H1 (cell line): ENCODE measurements at regions of chr15 and their contacts with region 1.

Region 1: DNA sequence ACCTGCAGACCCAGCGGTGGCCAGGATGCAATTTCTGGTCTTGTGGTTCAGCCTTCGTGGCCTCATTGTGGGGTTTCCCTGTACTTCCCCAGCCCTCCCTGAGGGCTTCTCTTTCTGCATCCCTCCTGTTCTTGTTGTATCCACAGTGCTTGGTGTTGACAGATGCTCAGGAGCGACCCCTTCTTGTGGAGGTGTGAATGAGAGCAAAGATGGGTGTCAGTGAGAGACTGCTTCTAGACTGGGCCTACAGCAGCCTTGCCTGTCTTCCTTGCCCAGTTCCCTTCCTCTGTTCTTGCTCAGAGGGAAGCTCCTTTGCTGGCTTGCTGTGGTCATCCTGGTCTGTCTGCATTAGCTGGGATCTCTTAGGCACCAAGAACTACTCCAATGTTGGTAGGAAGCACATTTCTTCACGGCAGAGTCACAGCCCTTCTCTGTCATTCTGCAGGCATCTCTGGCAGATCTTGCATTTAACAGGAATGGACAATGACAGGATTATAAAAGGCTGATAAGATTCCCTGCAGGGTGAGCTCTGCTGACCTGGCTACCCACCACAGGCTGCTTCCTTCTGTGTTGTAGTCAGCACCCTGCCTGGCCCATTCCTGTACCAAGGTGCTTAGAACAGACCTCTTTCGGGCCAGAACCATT is 317.8 kb upstream of the C2CD4B start:
- DNase-seq: peak; percentile 39 to 75
- H3K4me3 ChIP-seq: no peak overlapping the region
- H3K27ac ChIP-seq: no peak overlapping the region
- H3K4me1 ChIP-seq: peaks cover 0 to 6% (median 2%) of the 10 kb centered on the region in 4 experiments; a peak in 3 of 7 replicates
- H3K27me3 ChIP-seq: no peaks in the 10 kb centered on the region; a peak in 1 of 7 replicates
- CTCF ChIP-seq: peak; percentile 67 to 93 (median 73)
- EP300 ChIP-seq: no peak
- POLR2A ChIP-seq: no peak
- RAD21 ChIP-seq: peak; percentile 67 to 79

Region 2: DNA sequence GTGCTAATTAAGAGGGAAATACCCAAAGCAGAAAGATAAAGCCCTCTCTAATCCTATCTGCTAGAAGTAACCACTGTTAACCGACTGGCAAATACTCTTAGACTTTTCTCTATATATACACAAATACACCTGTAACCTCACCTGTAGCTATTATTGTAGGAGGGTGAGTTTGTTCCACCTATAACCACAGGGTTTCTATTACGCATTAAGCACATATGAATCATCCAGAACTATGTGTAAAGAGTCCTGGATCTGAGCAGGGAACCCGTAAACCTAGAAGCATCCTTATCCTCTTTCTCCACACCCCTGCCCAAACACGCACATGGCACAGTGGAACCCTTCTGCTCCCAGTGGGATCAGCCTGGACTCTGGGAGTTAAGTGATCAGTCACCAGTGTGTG is 145.0 kb before region 1 on chr15:
- CTCF ChIA-PET with region 1: no interaction called
- POLR2A ChIA-PET with region 1: no interaction called
- DNase-seq: no peak
- H3K4me3 ChIP-seq: no peak overlapping the region
- H3K27ac ChIP-seq: no peak overlapping the region
- H3K4me1 ChIP-seq: peaks cover 0 to 2% (median 0%) of the 10 kb centered on the region in 4 experiments; a peak in 1 of 7 replicates
- H3K27me3 ChIP-seq: no peaks in the 10 kb centered on the region
- CTCF ChIP-seq: no peak
- EP300 ChIP-seq: no peak
- POLR2A ChIP-seq: no peak
- RAD21 ChIP-seq: no peak

Region 3: DNA sequence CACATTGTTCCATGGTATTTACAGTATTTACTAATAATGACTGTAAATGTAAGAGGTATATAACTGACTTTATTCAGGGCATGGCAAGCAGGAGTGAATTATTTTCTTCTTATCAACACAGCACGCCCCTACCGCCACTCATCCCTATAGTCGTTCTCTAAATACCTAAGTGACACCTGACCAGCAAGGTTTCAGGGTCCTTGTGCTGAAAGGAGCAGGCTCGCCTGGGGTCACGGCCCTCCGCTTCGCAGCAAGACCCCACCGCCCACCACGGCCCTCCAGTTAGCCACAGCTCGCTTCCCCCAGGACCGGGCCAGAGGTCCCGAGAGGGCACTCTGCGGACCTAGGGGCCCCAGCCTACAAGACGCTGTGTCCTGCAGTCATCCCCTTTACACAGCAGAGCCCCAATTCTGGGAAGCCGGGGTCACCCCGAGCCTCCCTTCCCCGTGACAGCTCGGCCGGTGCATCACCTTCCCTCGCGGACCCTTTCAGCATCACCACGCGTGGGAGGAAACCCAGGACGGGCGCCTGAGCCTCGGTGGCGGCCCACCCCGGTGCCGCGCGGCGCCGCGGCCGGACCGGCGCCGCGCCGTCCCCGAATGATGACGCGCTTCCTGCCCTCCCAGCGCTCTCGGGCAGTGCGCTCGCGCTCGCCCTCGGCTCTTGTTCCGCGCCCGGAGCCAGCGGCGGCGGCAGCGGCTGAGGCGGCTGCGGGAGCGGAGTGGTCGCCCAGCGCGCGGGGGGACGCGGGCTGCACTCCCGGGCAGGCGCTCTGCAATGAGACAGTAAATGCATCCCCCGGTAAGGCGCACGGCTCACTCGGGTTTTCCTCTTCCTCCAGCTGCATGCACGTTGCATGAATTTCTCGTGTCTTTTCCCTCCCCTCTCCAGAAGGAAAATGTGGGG is 92.8 kb before region 1 on chr15:
- CTCF ChIA-PET with region 1: interaction called, 12 read pairs
- POLR2A ChIA-PET with region 1: no interaction called
- DNase-seq: peak in 1 of 2 experiments; percentile 84
- H3K4me3 ChIP-seq: peak within 1 kb of the TSS; percentile 56 to 99 (median 94)
- H3K27ac ChIP-seq: peak within 1 kb of the TSS; percentile 67
- H3K4me1 ChIP-seq: peaks cover 0 to 6% (median under 1%) of the 10 kb centered on the region in 4 experiments; a peak in 3 of 7 replicates
- H3K27me3 ChIP-seq: peaks cover 1 to 10% (median 9%) of the 10 kb centered on the region in 4 experiments; a peak in 6 of 7 replicates
- CTCF ChIP-seq: no peak
- EP300 ChIP-seq: peak in 1 of 2 experiments; percentile 10; a peak in 1 of 3 replicates
- POLR2A ChIP-seq: peak; percentile 96 to 97
- RAD21 ChIP-seq: 0 out of 4 replicates have a peak, but pooled peaks of 1 of the 2 experiments have one; percentile 13

Region 4: GRCh38 chr15:62469874-62470688 is 12.8 kb before region 1 on chr15:
- CTCF ChIA-PET with region 1: interaction called, 15 read pairs
- POLR2A ChIA-PET with region 1: interaction called, 6 read pairs
- DNase-seq: no peak
- H3K4me3 ChIP-seq: no peak overlapping the region
- H3K27ac ChIP-seq: no peak overlapping the region
- H3K4me1 ChIP-seq: peaks cover 9 to 26% (median 20%) of the 10 kb centered on the region in 4 experiments
- H3K27me3 ChIP-seq: no peaks in the 10 kb centered on the region
- CTCF ChIP-seq: no peak
- EP300 ChIP-seq: no peak
- POLR2A ChIP-seq: no peak
- RAD21 ChIP-seq: no peak